Posterior vena cava (tissue), 2 donors: ENCODE measurements at regions of chr3 and their contacts with region 1.

Region 1: GRCh38 chr3:124905849-124906248 is 18.7 kb upstream of the ITGB5 start:
- DNase-seq: no peak

Region 2: DNA sequence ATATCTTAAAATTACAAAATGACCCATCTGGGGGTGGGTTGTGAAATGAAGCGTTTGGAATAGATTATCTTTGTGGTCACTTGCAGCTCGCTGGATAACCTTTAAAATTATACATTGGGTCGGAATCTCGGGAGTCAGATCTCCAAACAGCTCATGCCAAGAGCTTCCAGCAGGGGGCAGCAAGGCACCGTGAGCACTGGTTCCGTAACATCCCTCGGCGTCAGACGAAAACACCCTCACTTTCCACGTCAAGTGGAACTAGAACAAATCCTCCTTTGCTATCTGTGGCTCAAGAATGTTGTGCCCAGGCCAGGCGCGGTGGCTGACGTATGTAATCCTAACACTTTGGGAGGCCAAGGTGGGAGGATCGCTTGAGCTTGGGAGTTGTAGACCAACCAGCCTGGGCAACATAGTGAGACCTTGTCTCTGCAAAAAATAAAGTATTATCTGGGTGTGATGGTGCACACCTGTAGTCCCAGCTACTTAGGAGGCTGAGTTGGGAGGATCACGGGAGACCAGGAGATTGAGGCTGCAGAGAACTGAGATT is 144.5 kb before region 1 on chr3:
- intact Hi-C with region 1: loop called (anchors 2 to 5 kb)
- DNase-seq: peak; percentile 97